Activated T-helper 1 cell treated with anti-CD3 and anti-CD28 coated beads, Interleukin-12 subunit alpha, Interleukin-12 subunit beta, Interleukin-2, Interleukin-4 antibody, amounts not matched to agents 30 ng/mL and 10 ng/mL and 1 ng/mL, durations not matched to agents 14 hours and 24 hours and 36 hours (primary cell): ENCODE measurements at regions of chr3 and their contacts with region 1.

Region 1: GRCh38 chr3:4387210-4388204 is 79.6 kb downstream of the SUMF1 start:
- DNase-seq: no peak
- H3K4me3 Mint-ChIP-seq: peak overlapping the region; percentile 8
- H3K27ac Mint-ChIP-seq: peak overlapping the region; percentile 88
- H3K4me1 Mint-ChIP-seq: peaks cover 52% of the 10 kb centered on the region
- H3K27me3 Mint-ChIP-seq: peaks cover 1% of the 10 kb centered on the region

Region 2: GRCh38 chr3:4406746-4407568 is 19.4 kb after region 1 on chr3:
- intact Hi-C with region 1: loop called (anchors 1 kb)
- DNase-seq: no peak
- H3K4me3 Mint-ChIP-seq: no peak overlapping the region
- H3K27ac Mint-ChIP-seq: no peak overlapping the region
- H3K4me1 Mint-ChIP-seq: peaks cover 57% of the 10 kb centered on the region
- H3K27me3 Mint-ChIP-seq: peaks cover 1% of the 10 kb centered on the region

Region 3: DNA sequence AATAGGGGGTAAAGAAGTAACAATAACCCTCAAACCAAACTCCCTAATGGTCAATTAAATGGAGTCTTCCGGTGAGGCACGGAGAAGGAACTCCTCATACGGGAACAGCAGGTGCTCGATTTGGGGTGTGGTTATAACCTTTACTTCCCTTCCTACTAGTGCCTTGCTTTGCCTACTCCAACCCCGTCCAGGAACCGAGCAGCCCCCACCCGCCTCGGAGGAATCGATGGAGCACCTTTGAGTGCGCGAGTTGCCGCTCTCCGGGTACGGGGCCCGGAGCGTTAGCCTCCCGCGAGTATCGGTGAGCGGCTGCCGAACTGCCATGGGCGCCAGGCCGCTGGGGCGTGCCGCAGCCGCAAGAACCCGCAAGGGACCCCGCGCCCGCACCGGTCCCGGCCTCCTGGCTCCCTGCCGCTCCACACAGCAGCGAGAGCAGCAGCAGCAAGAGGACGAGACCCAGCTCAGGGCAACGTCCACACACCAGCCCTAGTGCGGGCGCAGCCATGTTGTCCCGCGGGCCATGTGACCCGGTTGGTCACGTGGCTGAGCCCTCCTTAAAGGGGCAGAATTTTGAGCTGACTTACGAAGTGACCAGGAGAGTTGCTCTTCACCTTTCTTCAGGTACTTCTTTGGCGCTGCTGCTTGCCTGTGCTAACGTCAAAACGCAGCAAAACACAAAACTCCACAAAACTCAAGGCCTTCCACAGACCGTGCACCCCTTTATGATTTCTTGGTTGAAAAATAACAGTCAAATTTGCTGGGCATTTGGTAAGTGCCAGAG is 79.4 kb after region 1 on chr3 and contains the start of gene SUMF1:
- intact Hi-C with region 1: loop called (anchors 1 kb)
- DNase-seq: peak; percentile 68
- H3K4me3 Mint-ChIP-seq: peak within 1 kb of the TSS; percentile 95
- H3K27ac Mint-ChIP-seq: peak within 1 kb of the TSS; percentile 91
- H3K4me1 Mint-ChIP-seq: peaks cover 15% of the 10 kb centered on the region
- H3K27me3 Mint-ChIP-seq: peaks cover 2% of the 10 kb centered on the region
- total RNA-seq, gene SUMF1: 6.1 and 7.0 TPM in 2 replicates

Region 4: GRCh38 chr3:4504340-4505261 is 117.1 kb after region 1 on chr3:
- intact Hi-C with region 1: no loop called
- DNase-seq: peak; percentile 4
- H3K4me3 Mint-ChIP-seq: peak overlapping the region; percentile 17
- H3K27ac Mint-ChIP-seq: peak overlapping the region; percentile 82
- H3K4me1 Mint-ChIP-seq: peaks cover 41% of the 10 kb centered on the region
- H3K27me3 Mint-ChIP-seq: no peaks in the 10 kb centered on the region

Region 5: GRCh38 chr3:4850928-4851265 is 463.4 kb after region 1 on chr3:
- intact Hi-C with region 1: loop called (anchors 1 kb)
- DNase-seq: peak; percentile 56
- H3K4me3 Mint-ChIP-seq: peak overlapping the region; percentile 67
- H3K27ac Mint-ChIP-seq: peak overlapping the region; percentile 99
- H3K4me1 Mint-ChIP-seq: peaks cover 85% of the 10 kb centered on the region
- H3K27me3 Mint-ChIP-seq: no peaks in the 10 kb centered on the region

Region 6: GRCh38 chr3:5122030-5122740 is 734.7 kb after region 1 on chr3 and contains the start of gene ARL8B:
- intact Hi-C with region 1: loop called (anchors 10 kb)
- DNase-seq: peak; percentile 90
- H3K4me3 Mint-ChIP-seq: peak within 1 kb of the TSS; percentile 88
- H3K27ac Mint-ChIP-seq: peak within 1 kb of the TSS; percentile 87
- H3K4me1 Mint-ChIP-seq: peaks cover 40% of the 10 kb centered on the region
- H3K27me3 Mint-ChIP-seq: no peaks in the 10 kb centered on the region
- total RNA-seq, gene ARL8B: 43.4 and 51.0 TPM in 2 replicates